ENCODE measurements at regions of chr6 and their contacts with region 1.

Region 1: GRCh38 chr6:23964865-23965264 is 161.2 kb upstream of the NRSN1 start:
- DNase-seq: no peak
- H3K4me3 Mint-ChIP-seq: no peak overlapping the region
- H3K27ac Mint-ChIP-seq: no peak overlapping the region
- H3K4me1 Mint-ChIP-seq: no peaks in the 10 kb centered on the region
- H3K27me3 Mint-ChIP-seq: no peaks in the 10 kb centered on the region

Region 2: GRCh38 chr6:23280437-23280836 is 684.4 kb before region 1 on chr6:
- CTCF ChIA-PET with region 1: no interaction called
- intact Hi-C with region 1: loop called (anchors 5 kb)
- DNase-seq: no peak
- H3K4me3 Mint-ChIP-seq: no peak overlapping the region
- H3K27ac Mint-ChIP-seq: no peak overlapping the region
- H3K4me1 Mint-ChIP-seq: no peaks in the 10 kb centered on the region
- H3K27me3 Mint-ChIP-seq: no peaks in the 10 kb centered on the region

Region 3: GRCh38 chr6:23953976-23954375 is 10.9 kb before region 1 on chr6:
- CTCF ChIA-PET with region 1: no interaction called
- intact Hi-C with region 1: no loop called
- DNase-seq: no peak
- H3K4me3 Mint-ChIP-seq: no peak overlapping the region
- H3K27ac Mint-ChIP-seq: no peak overlapping the region
- H3K4me1 Mint-ChIP-seq: no peaks in the 10 kb centered on the region
- H3K27me3 Mint-ChIP-seq: no peaks in the 10 kb centered on the region